Heart left ventricle (tissue), 16 donors: ENCODE measurements at regions of chr16 and their contacts with region 1.

Region 1: GRCh38 chr16:24820522-24820921 is 25.2 kb upstream of the SLC5A11 start:
- DNase-seq: no peak
- ATAC-seq: no peak
- H3K4me3 ChIP-seq: no peak overlapping the region
- H3K27ac ChIP-seq: no peak overlapping the region
- H3K4me1 ChIP-seq: peaks cover 0 to 4% (median 0%) of the 10 kb centered on the region in 12 donors
- H3K27me3 ChIP-seq: no peaks in the 10 kb centered on the region
- CTCF ChIP-seq: no peak
- POLR2A ChIP-seq: no peak

Region 2: GRCh38 chr16:24771132-24771778 is 49.3 kb before region 1 on chr16:
- intact Hi-C with region 1: no loop called
- DNase-seq: no peak
- ATAC-seq: no peak
- H3K4me3 ChIP-seq: no peak overlapping the region
- H3K27ac ChIP-seq: peak overlapping the region in 1 of 12 donors; percentile 22
- H3K4me1 ChIP-seq: peaks cover 0 to 55% (median 24%) of the 10 kb centered on the region in 12 donors
- H3K27me3 ChIP-seq: no peaks in the 10 kb centered on the region
- CTCF ChIP-seq: no peak
- POLR2A ChIP-seq: no peak

Region 3: DNA sequence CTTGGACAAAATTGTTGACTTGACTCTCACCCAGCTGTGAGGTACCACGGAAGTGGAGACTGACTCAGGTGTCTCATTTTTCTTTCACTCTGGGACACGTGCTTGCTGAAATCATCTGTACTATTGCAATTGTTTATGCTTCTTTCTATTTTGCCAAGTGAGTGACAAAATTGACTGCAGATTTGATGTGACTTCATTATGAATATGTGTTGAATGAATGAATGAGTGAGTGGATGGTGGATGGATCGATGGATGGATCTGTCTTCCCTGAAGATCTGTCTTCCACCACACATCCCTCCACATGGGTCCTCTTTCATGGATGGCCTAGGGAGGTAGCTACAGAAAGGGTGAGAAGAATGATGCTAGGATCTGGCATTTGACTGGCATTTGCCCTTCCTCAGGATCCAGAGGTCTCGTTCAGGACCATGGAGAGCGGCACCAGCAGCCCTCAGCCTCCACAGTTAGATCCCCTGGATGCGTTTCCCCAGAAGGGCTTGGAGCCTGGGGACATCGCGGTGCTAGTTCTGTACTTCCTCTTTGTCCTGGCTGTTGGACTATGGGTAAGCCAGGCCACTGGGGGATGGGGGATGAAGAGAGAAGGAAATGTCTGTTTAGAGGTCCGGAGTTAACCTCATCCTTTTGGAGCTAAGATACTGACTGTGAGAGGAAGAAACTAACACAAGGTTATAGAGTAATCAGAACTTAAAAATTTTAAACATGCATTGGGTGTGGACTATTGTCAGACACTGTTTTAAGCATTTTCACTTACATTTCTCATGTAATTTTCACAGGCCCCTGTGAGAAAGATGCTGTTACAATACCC is 37.9 kb after region 1 on chr16:
- intact Hi-C with region 1: no loop called
- DNase-seq: peak; percentile 25 to 68 (median 46)
- ATAC-seq: peak in 3 of 4 donors; percentile 60 to 69 (median 64)
- H3K4me3 ChIP-seq: no peak overlapping the region
- H3K27ac ChIP-seq: no peak overlapping the region
- H3K4me1 ChIP-seq: peaks cover 0 to 10% (median 1%) of the 10 kb centered on the region in 12 donors
- H3K27me3 ChIP-seq: no peaks in the 10 kb centered on the region
- CTCF ChIP-seq: no peak
- POLR2A ChIP-seq: no peak

Region 4: GRCh38 chr16:24950275-24950674 is 129.8 kb after region 1 on chr16:
- intact Hi-C with region 1: loop called in 1 of 10 experiments (anchors 10 kb)
- DNase-seq: no peak
- ATAC-seq: no peak
- H3K4me3 ChIP-seq: no peak overlapping the region
- H3K27ac ChIP-seq: no peak overlapping the region
- H3K4me1 ChIP-seq: no peaks in the 10 kb centered on the region
- H3K27me3 ChIP-seq: no peaks in the 10 kb centered on the region
- CTCF ChIP-seq: no peak
- POLR2A ChIP-seq: no peak

Region 5: GRCh38 chr16:25066747-25067631 is 246.5 kb after region 1 on chr16:
- intact Hi-C with region 1: no loop called
- DNase-seq: peak; percentile 86 to 91 (median 89)
- ATAC-seq: peak; percentile 68 to 96 (median 93)
- H3K4me3 ChIP-seq: peak overlapping the region; percentile 46 to 91 (median 80)
- H3K27ac ChIP-seq: peak overlapping the region; percentile 83 to 97 (median 93)
- H3K4me1 ChIP-seq: peaks cover 0 to 35% (median 18%) of the 10 kb centered on the region in 12 donors
- H3K27me3 ChIP-seq: no peaks in the 10 kb centered on the region
- CTCF ChIP-seq: no peak
- POLR2A ChIP-seq: peak; percentile 46 to 93